Activated B cell treated with CpG ODN at 0.5 μM for 24 hours (primary cell): ENCODE measurements at regions of chr9 and their contacts with region 1.

Region 1: DNA sequence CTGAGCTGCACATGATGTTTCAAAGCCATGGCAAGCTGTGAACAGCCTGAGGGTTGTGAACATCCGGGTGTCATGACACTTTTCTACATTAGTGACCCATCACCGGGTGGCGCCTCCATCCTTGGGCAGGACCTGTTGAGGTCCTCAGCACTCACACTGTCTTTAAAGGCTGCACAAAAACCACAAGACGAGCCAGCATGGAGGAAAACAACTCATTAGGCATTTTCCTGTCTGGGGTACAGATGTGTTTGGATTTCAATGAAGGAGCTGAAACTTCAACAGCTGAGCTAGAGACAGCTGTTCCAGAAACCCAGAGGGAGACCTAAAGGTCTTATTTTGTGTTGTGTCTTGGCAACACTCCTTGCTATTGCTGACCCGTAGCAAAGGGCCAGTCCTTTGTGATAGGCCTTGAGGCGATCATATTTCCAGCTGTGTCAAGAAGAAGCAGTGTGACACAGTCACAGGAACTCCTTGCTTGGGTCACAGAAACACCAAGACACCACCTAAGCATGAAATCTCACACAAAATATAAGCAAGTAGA is 151.8 kb upstream of the VLDLR start:
- DNase-seq: no peak
- ATAC-seq: no peak
- H3K4me3 Mint-ChIP-seq: no peak overlapping the region
- H3K27ac Mint-ChIP-seq: no peak overlapping the region
- H3K4me1 Mint-ChIP-seq: no peaks in the 10 kb centered on the region
- H3K27me3 Mint-ChIP-seq: peaks cover 14% of the 10 kb centered on the region
- CTCF ChIP-seq: no peak

Region 2: GRCh38 chr9:2453703-2454102 is 16.0 kb before region 1 on chr9:
- CTCF ChIA-PET with region 1: no interaction called
- POLR2A ChIA-PET with region 1: no interaction called
- intact Hi-C with region 1: no loop called
- DNase-seq: no peak
- ATAC-seq: no peak
- H3K4me3 Mint-ChIP-seq: no peak overlapping the region
- H3K27ac Mint-ChIP-seq: no peak overlapping the region
- H3K4me1 Mint-ChIP-seq: no peaks in the 10 kb centered on the region
- H3K27me3 Mint-ChIP-seq: peaks cover 4% of the 10 kb centered on the region
- CTCF ChIP-seq: no peak

Region 3: GRCh38 chr9:2727966-2728613 is 258.3 kb after region 1 on chr9:
- CTCF ChIA-PET with region 1: no interaction called
- POLR2A ChIA-PET with region 1: no interaction called
- intact Hi-C with region 1: loop called (anchors 5 kb)
- DNase-seq: no peak
- ATAC-seq: peak; percentile 47
- H3K4me3 Mint-ChIP-seq: no peak overlapping the region
- H3K27ac Mint-ChIP-seq: no peak overlapping the region
- H3K4me1 Mint-ChIP-seq: peaks cover 10% of the 10 kb centered on the region
- H3K27me3 Mint-ChIP-seq: no peaks in the 10 kb centered on the region
- CTCF ChIP-seq: no peak